Activated naive CD4-positive, alpha-beta T cell treated with anti-CD3 and anti-CD28 coated beads, Interleukin-2, amount 10 ng/mL, durations not matched to agents 7 days and 5 days (primary cell): ENCODE measurements at regions of chr16 and their contacts with region 1.

Region 1: DNA sequence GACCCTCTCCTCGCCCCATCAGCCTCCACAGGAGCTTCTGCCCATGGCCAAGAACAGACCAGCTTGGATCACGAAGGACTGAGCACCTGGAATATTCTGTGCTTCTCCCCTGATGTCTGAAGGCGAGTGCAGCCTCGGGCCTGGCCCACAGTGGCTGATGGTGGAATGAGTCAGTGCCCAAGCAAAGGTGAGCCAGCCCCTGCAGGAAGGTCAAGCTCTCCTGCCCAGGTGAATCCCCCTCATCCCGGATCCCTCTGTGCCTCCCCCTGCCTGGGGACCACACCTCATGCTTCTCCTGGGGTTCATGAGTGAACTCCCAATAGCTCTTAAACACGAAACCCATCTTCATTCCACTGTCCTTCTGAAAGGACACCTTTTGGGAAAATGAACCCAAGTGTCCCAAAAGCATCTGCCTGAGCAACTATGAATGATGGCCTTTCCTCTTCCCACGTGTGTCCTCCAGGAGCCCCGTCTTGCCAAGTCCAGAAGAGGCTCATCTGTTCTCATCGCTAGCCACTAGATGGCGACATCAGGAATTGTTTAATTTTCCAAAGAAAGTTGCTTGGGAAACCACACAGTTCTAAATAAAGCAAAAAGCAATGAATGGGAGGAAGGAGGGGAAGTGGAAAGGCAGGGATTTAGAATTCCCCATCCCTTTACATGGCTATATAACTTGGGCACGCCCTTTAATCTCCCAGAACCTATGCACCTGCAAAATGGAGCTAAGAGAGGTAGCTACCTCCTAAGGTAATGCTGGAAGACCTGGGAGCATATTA is 9.2 kb upstream of the CDH5 start:
- DNase-seq: peak; percentile 41
- H3K4me3 Mint-ChIP-seq: no peak overlapping the region
- H3K27ac Mint-ChIP-seq: no peak overlapping the region
- H3K4me1 Mint-ChIP-seq: peaks cover 8% of the 10 kb centered on the region
- H3K27me3 Mint-ChIP-seq: peaks cover 65% of the 10 kb centered on the region

Region 2: GRCh38 chr16:66344533-66345145 is 12.7 kb before region 1 on chr16:
- CTCF ChIA-PET with region 1: interaction called, 29 read pairs
- DNase-seq: peak; percentile 49
- H3K4me3 Mint-ChIP-seq: no peak overlapping the region
- H3K27ac Mint-ChIP-seq: no peak overlapping the region
- H3K4me1 Mint-ChIP-seq: no peaks in the 10 kb centered on the region
- H3K27me3 Mint-ChIP-seq: peaks cover 49% of the 10 kb centered on the region

Region 3: DNA sequence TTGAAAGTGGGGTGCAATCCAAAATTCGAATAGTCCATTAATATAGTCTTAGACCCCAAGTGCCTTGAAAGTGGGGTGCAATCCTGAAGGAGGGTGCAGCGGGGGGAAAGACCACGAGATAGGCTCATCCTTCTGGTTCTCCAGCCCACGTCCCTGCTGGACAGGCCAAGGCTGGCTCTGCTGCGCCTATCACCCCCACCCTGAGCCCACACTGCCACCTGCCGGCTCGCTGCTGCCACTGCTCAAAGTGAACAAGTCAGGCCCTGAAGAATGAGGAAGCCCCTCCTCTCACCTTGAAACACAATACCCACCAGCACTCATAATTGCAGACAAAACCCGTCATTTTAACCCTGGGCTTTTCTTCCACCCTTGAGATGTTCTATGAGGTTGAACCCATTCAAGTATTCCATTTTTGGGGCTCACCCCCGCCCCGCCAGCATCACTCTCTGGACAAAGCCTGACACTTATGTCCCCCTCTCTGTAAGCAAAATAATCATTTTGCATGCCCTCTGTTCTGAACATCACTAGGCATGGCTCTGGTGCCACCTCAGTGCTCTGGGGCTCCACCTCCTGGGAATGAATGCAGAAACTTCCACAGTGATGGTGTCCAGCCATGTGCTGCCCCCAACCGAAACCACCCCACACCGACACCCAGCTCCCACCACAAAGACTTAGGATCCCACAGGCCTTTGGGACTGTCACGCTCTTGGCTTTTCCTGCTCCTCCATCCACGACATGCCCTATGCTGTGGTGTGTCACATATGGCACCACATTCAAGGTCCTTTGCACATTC is 126.5 kb after region 1 on chr16:
- CTCF ChIA-PET with region 1: interaction called, 12 read pairs
- DNase-seq: peak; percentile 84
- H3K4me3 Mint-ChIP-seq: no peak overlapping the region
- H3K27ac Mint-ChIP-seq: no peak overlapping the region
- H3K4me1 Mint-ChIP-seq: peaks cover 24% of the 10 kb centered on the region
- H3K27me3 Mint-ChIP-seq: peaks cover 21% of the 10 kb centered on the region